Adrenal gland (tissue), 19 donors: ENCODE measurements at regions of chr16 and their contacts with region 1.

Region 1: GRCh38 chr16:15434425-15435215 is at the start of gene BMERB1:
- DNase-seq: peak; percentile 47 to 77 (median 58)
- H3K4me3 ChIP-seq: peak within 1 kb of the TSS in 3 of 4 donors; percentile 23 to 66 (median 40)
- H3K27ac ChIP-seq: peak within 1 kb of the TSS in 2 of 5 donors; percentile 61 to 64
- H3K4me1 ChIP-seq: peaks cover 0 to 10% of the 10 kb centered on the region in 2 donors
- H3K27me3 ChIP-seq: no peaks in the 10 kb centered on the region
- CTCF ChIP-seq: no peak
- POLR2A ChIP-seq: no peak
- total RNA-seq, gene BMERB1: 9.8 to 56.0 (median 19.3) TPM

Region 2: DNA sequence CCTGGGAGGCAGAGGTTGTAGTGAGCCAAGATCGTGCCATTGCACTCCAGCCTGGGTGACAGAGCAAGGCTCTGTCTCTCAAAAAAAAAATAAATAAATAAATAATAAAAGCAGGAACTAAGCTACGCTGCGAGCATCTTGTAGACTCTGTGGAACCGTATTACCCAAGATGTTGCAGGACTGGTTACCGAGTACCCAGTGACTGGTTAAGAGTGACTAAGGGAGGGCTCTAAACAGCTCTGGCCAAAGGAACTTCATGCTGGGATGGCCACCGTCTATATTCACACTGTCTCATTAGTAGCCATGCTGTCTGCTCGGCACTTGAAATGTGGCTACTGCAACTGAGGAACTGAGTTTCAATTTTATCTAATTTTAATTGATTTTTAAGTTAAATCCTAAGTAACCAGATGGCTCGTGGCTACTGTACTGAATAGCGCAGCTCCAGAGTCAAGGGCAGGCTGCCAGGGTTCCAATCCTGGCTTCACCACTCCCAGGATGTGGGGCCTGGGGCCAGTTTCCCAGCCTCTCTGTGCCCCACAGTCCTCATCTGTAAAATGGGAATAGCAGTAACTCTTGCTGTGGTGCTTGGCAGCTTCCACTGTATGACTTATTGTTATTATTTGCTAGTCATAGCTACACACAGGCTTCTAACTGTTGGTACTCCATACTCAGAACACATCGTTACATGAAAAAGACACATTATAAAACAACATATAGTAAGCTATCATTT is 381.7 kb before region 1 on chr16:
- intact Hi-C with region 1: no loop called
- DNase-seq: no peak
- H3K4me3 ChIP-seq: no peak overlapping the region
- H3K27ac ChIP-seq: no peak overlapping the region
- H3K4me1 ChIP-seq: peaks cover 0 to 4% of the 10 kb centered on the region in 2 donors
- H3K27me3 ChIP-seq: no peaks in the 10 kb centered on the region
- CTCF ChIP-seq: no peak
- POLR2A ChIP-seq: no peak

Region 3: DNA sequence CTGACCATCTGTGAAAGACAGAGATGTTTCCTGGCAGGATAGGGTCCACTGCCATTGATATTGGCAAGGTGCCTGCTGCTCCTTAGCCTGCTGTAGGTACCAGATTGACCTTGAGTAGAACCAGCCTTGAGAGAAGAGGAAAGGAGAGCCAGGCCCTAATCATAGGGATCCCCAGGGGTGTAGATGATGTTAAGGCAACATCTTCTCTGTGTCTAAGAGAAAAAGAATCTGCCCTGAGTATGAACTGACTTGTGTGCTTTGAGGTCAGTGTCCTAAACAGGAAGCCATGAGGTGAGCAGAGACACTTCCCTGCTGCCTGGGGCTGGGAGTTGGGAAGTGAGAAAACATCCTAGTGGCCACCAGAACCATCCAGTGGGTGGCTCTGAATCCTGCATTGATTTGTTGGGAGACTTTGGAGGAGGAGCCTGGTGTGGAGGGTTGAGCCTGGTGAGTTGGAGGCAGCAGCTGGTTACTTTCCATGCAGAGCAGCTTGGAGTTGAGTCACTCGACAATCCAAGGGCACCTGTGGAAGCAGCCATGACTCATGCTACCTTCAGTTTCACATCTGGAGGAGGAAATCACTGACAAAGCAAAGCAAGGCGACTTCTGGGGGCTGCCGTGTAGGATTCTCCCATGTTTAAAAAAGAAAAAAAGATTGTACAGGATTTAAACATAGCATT is 47.6 kb after region 1 on chr16:
- intact Hi-C with region 1: no loop called
- DNase-seq: peak; percentile 83 to 95 (median 95)
- H3K4me3 ChIP-seq: no peak overlapping the region
- H3K27ac ChIP-seq: peak overlapping the region in 3 of 5 donors; percentile 53 to 83 (median 78)
- H3K4me1 ChIP-seq: peaks cover 6 to 10% of the 10 kb centered on the region in 2 donors
- H3K27me3 ChIP-seq: no peaks in the 10 kb centered on the region
- CTCF ChIP-seq: peak in 5 of 6 experiments; percentile 16 to 42 (median 36)
- POLR2A ChIP-seq: peak in 1 of 2 donors; percentile 39

Region 4: GRCh38 chr16:15553313-15554088 is 118.9 kb after region 1 on chr16:
- intact Hi-C with region 1: loop called in 1 of 2 experiments (anchors 10 kb)
- DNase-seq: no peak
- H3K4me3 ChIP-seq: peak overlapping the region in 1 of 4 donors; percentile 18
- H3K27ac ChIP-seq: no peak overlapping the region
- H3K4me1 ChIP-seq: no peaks in the 10 kb centered on the region
- H3K27me3 ChIP-seq: no peaks in the 10 kb centered on the region
- CTCF ChIP-seq: no peak
- POLR2A ChIP-seq: no peak

Region 5: GRCh38 chr16:15732416-15732815 is 297.8 kb after region 1 on chr16:
- intact Hi-C with region 1: no loop called
- DNase-seq: no peak
- H3K4me3 ChIP-seq: no peak overlapping the region
- H3K27ac ChIP-seq: no peak overlapping the region
- H3K4me1 ChIP-seq: no peaks in the 10 kb centered on the region
- H3K27me3 ChIP-seq: no peaks in the 10 kb centered on the region
- CTCF ChIP-seq: no peak
- POLR2A ChIP-seq: no peak

Region 6: DNA sequence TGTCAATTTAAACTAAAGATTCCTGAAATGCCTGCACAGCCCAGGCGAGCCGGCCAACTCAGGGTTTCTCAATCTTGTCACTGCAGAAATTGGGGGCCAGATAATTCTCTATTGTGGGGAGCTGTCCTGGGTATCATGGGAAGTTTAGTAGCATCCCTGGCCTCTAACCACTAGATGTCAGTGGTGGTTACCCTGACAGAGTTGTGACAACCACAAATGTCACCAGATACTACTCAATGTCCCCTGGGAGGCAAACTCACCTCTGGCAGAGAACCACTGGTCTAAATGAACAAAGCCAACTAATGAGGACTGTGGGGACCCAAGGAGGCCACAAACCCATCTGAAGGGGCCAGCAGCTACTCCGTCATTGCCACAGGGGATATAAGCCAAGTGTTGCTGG is 331.3 kb after region 1 on chr16:
- intact Hi-C with region 1: no loop called
- DNase-seq: peak; percentile 29 to 71 (median 41)
- H3K4me3 ChIP-seq: no peak overlapping the region
- H3K27ac ChIP-seq: no peak overlapping the region
- H3K4me1 ChIP-seq: no peaks in the 10 kb centered on the region
- H3K27me3 ChIP-seq: no peaks in the 10 kb centered on the region
- CTCF ChIP-seq: peak; percentile 48 to 70 (median 68)
- POLR2A ChIP-seq: no peak